ENCODE measurements at regions of chr18 and their contacts with region 1.

Region 1: DNA sequence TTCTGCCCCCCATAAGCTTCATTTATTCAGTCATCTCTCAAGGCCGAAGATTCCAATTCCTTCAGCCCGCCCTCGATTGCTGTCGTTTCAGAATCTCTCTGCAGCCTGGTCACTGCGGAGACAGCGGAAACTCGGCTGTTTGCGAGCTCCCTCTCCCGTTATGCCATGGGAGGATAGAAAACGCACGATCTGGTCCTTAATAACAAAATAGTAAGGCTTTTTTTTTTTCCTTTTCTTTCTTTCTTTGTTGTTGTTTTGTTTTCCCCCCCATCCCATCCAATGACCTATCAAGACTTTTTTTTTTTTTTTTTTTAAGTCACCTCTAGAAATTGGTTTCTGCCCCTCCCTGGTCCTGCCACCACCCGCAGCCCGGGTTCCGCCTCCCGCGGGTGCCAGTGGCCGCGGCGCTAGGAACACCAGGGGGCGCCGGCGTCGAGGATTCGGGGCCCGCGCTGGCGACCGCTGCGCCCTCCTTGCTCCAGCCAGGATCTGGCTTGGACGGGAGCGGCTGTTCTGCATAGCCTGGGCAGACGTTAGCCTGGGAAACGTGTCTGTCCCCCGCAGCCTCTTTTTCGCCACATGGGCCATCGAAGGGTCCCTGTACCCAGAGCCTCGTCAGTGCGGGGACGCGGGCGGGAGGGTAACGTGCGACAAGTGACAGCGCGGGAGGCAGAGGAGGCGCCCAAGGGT is 10.1 kb downstream of the CPLX4 start:
- DNase-seq: peak; percentile 81
- ATAC-seq: peak; percentile 91
- H3K4me3 Mint-ChIP-seq: peak overlapping the region; percentile 48
- H3K27ac Mint-ChIP-seq: no peak overlapping the region
- H3K4me1 Mint-ChIP-seq: no peaks in the 10 kb centered on the region
- H3K27me3 Mint-ChIP-seq: peaks cover 67% of the 10 kb centered on the region
- CTCF ChIP-seq: peak; percentile 20; the same call in 1 of the 2 replicates

Region 2: GRCh38 chr18:59276047-59276446 is 32.3 kb before region 1 on chr18:
- CTCF ChIA-PET with region 1: interaction called, 26 read pairs
- POLR2A ChIA-PET with region 1: interaction called, 12 read pairs
- DNase-seq: no peak
- ATAC-seq: 0 out of 2 replicates have a peak, but pooled peaks have one; percentile 3
- H3K4me3 Mint-ChIP-seq: peak overlapping the region; percentile 16; the same call in 1 of the 2 replicates
- H3K27ac Mint-ChIP-seq: no peak overlapping the region
- H3K4me1 Mint-ChIP-seq: peaks cover 32% of the 10 kb centered on the region
- H3K27me3 Mint-ChIP-seq: peaks cover 98% of the 10 kb centered on the region
- CTCF ChIP-seq: no peak

Region 3: DNA sequence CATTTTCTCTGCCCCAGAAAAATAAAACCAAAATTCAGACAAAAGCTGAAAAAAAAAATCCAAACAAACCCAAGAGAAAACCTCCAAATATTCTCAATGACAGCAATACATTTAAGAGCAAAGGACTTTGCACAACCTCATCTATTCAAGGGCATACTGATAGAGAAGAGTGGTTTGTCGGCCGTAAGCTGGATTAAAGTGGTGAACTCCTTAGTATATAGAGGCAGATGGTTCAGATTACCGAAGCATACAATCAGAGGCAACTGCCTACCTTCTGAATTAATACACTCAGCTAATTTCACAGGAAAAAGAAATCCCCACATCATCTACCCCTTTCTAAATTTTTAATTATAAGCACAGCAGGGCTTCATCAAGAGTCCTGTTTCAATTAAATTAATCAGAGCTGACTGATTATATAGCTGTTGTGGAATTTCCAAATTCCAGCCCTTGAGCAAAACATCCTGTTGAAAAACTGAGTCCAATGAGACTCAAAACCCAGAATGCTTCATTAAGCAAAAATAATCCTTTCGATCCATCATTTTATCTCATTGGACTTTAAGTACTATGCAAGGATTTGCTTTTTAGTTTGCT is 10.2 kb after region 1 on chr18 and contains the start of gene CPLX4:
- CTCF ChIA-PET with region 1: interaction called, 17 read pairs
- POLR2A ChIA-PET with region 1: no interaction called
- DNase-seq: no peak
- ATAC-seq: no peak
- H3K4me3 Mint-ChIP-seq: no peak within 1 kb of the TSS
- H3K27ac Mint-ChIP-seq: no peak within 1 kb of the TSS
- H3K4me1 Mint-ChIP-seq: no peaks in the 10 kb centered on the region
- H3K27me3 Mint-ChIP-seq: no peaks in the 10 kb centered on the region; the same call in none of the 2 replicates
- CTCF ChIP-seq: no peak
- total RNA-seq, gene CPLX4: not detected in 3 replicates

Region 4: DNA sequence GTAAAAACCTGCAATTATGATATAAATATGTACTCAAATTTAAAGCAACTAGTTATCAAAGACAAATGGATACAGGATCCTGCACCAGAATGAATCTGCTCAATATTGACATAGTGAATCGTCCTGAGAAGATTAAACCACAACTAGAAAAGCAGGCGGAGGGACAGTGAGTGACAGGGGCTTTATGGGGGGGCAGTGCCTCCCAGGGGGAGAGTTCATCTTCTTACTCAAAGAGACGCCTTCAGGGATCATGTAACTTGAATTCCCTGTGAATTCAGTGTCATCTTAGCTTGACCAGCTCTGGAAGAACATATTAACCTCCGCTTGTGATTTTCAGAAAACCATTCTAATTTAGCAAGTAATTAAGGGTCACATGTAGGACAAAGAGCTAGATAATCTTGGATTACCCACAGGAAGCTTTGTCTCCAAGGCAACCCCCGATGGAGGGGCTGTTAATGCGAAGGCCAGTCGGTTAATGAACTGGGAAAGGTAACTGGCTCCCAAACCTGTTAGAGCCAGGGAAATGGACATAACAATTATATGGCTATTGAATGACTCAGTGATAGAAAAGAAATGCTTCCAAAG is 68.0 kb after region 1 on chr18:
- CTCF ChIA-PET with region 1: no interaction called
- POLR2A ChIA-PET with region 1: no interaction called
- DNase-seq: no peak
- ATAC-seq: 0 out of 2 replicates have a peak, but pooled peaks have one; percentile 18
- H3K4me3 Mint-ChIP-seq: no peak overlapping the region
- H3K27ac Mint-ChIP-seq: no peak overlapping the region
- H3K4me1 Mint-ChIP-seq: peaks cover 22% of the 10 kb centered on the region
- H3K27me3 Mint-ChIP-seq: peaks cover 61% of the 10 kb centered on the region
- CTCF ChIP-seq: no peak

Region 5: GRCh38 chr18:59514203-59514602 is 205.8 kb after region 1 on chr18:
- CTCF ChIA-PET with region 1: no interaction called
- POLR2A ChIA-PET with region 1: no interaction called
- DNase-seq: no peak
- ATAC-seq: no peak
- H3K4me3 Mint-ChIP-seq: no peak overlapping the region
- H3K27ac Mint-ChIP-seq: no peak overlapping the region
- H3K4me1 Mint-ChIP-seq: peaks cover 9% of the 10 kb centered on the region
- H3K27me3 Mint-ChIP-seq: no peaks in the 10 kb centered on the region
- CTCF ChIP-seq: no peak

Measured in WTC11 (cell line).